CD4-positive, alpha-beta T cell (primary cell): ENCODE measurements at regions of chr9 and their contacts with region 1.

Region 1: GRCh38 chr9:136267261-136268111 is 21.9 kb upstream of the QSOX2 start:
- DNase-seq: peak; percentile 78 to 94 (median 84)
- ATAC-seq: peak; percentile 98
- H3K4me3 ChIP-seq: peak overlapping the region; percentile 76
- H3K4me3 Mint-ChIP-seq: peak overlapping the region; percentile 79
- H3K27ac ChIP-seq: peak overlapping the region in 1 of 2 donors; percentile 55
- H3K27ac Mint-ChIP-seq: peak overlapping the region; percentile 75
- H3K4me1 ChIP-seq: peaks cover 15% of the 10 kb centered on the region
- H3K4me1 Mint-ChIP-seq: peaks cover 4% of the 10 kb centered on the region
- H3K27me3 ChIP-seq: no peaks in the 10 kb centered on the region
- H3K27me3 Mint-ChIP-seq: no peaks in the 10 kb centered on the region
- CTCF ChIP-seq: peak; percentile 28

Region 2: GRCh38 chr9:135060461-135061116 is 1206.9 kb before region 1 on chr9:
- CTCF ChIA-PET with region 1: no interaction called
- POLR2A ChIA-PET with region 1: no interaction called
- intact Hi-C with region 1: no loop called
- DNase-seq: peak in 1 of 14 experiments; percentile 28
- ATAC-seq: no peak
- H3K4me3 ChIP-seq: no peak overlapping the region
- H3K4me3 Mint-ChIP-seq: no peak overlapping the region
- H3K27ac ChIP-seq: no peak overlapping the region
- H3K27ac Mint-ChIP-seq: no peak overlapping the region
- H3K4me1 ChIP-seq: no peaks in the 10 kb centered on the region
- H3K4me1 Mint-ChIP-seq: no peaks in the 10 kb centered on the region
- H3K27me3 ChIP-seq: peaks cover 0 to 4% of the 10 kb centered on the region in 2 experiments
- H3K27me3 Mint-ChIP-seq: peaks cover 4% of the 10 kb centered on the region
- CTCF ChIP-seq: no peak

Region 3: DNA sequence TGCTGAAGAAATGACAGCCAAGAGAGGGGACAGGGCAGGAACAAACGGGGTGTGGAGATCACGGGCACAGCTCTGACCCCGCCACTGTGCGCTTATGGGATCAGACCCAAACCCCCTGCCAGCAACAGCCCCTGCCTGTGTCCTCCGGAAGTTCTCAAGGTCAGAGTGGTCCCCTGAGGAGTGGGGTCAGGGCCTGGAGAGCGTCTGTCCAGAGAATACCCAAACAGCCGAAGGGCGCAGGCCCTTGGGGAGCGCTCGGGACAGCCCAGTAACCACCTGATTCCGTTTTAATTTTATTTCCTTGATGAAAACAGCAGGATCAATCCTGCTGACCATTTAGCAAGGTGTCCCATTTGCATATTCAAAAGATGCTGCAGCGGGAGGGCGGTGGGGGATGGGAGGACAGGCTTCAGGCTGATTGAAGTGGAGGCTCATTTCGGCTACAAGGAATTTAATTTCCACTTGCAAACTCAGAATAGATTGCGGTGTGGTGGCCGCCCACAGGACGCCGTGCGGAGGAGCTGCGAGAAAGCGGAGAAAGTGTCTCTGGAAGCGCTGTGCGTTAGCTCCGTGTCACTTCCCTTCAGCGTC is 116.2 kb before region 1 on chr9:
- CTCF ChIA-PET with region 1: no interaction called
- POLR2A ChIA-PET with region 1: no interaction called
- intact Hi-C with region 1: no loop called
- DNase-seq: no peak
- ATAC-seq: no peak
- H3K4me3 ChIP-seq: no peak overlapping the region
- H3K4me3 Mint-ChIP-seq: no peak overlapping the region
- H3K27ac ChIP-seq: no peak overlapping the region
- H3K27ac Mint-ChIP-seq: no peak overlapping the region
- H3K4me1 ChIP-seq: no peaks in the 10 kb centered on the region
- H3K4me1 Mint-ChIP-seq: no peaks in the 10 kb centered on the region
- H3K27me3 ChIP-seq: peaks cover 0 to 14% of the 10 kb centered on the region in 2 experiments
- H3K27me3 Mint-ChIP-seq: peaks cover 2% of the 10 kb centered on the region
- CTCF ChIP-seq: no peak

Region 4: DNA sequence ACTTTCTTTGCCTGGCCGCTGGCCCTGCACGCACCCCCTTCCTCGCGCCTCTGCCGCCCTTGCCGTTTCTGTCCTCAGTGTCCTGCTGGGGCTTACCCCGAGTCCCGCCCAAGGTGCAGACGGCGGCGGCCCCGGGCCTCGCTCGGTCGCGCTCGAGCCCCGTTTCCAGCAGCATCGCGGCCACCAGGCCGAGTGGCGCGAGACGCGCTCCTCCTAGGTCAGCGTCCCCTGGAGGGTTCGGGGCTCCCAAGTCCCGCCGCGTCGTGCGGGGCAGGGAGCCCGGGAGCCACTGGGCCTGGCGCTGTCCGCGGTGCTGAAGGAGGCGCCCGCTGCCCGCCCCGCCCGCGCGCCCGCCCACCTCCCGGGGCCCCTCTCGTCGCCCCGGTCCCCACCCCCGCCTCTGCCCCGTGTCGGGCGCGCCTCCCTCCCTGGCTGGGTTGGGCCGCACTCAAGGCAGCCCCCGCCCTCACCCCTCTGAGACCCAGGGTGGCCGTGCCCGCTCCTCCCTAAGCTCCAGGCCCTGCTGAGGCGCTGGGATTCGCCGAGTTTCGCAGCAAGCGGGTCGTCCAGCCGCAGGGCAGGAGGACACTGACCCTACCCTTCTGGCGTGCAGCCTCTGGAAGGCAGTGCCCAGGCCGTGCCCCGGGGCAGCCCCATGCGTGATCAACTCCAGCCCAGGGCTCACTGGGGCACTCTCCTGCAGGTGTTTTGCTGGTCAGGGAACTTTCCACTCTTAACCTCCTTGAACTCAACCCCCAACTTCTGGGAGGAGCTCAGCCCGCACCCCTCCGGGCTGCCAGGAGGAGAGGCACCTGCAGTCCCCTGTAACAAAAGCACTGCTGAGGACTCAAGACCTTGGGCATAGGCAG is 62.4 kb before region 1 on chr9 and contains the start of gene LHX3:
- CTCF ChIA-PET with region 1: no interaction called
- POLR2A ChIA-PET with region 1: no interaction called
- intact Hi-C with region 1: no loop called
- DNase-seq: peak in 7 of 14 experiments; percentile 6 to 59 (median 13)
- ATAC-seq: peak; percentile 51
- H3K4me3 ChIP-seq: no peak within 1 kb of the TSS
- H3K4me3 Mint-ChIP-seq: no peak within 1 kb of the TSS
- H3K27ac ChIP-seq: no peak within 1 kb of the TSS
- H3K27ac Mint-ChIP-seq: no peak within 1 kb of the TSS
- H3K4me1 ChIP-seq: no peaks in the 10 kb centered on the region
- H3K4me1 Mint-ChIP-seq: no peaks in the 10 kb centered on the region
- H3K27me3 ChIP-seq: peaks cover 33 to 38% of the 10 kb centered on the region in 2 experiments
- H3K27me3 Mint-ChIP-seq: peaks cover 27% of the 10 kb centered on the region
- CTCF ChIP-seq: no peak
- total RNA-seq, gene LHX3: 0.11 to 0.16 TPM

Region 5: DNA sequence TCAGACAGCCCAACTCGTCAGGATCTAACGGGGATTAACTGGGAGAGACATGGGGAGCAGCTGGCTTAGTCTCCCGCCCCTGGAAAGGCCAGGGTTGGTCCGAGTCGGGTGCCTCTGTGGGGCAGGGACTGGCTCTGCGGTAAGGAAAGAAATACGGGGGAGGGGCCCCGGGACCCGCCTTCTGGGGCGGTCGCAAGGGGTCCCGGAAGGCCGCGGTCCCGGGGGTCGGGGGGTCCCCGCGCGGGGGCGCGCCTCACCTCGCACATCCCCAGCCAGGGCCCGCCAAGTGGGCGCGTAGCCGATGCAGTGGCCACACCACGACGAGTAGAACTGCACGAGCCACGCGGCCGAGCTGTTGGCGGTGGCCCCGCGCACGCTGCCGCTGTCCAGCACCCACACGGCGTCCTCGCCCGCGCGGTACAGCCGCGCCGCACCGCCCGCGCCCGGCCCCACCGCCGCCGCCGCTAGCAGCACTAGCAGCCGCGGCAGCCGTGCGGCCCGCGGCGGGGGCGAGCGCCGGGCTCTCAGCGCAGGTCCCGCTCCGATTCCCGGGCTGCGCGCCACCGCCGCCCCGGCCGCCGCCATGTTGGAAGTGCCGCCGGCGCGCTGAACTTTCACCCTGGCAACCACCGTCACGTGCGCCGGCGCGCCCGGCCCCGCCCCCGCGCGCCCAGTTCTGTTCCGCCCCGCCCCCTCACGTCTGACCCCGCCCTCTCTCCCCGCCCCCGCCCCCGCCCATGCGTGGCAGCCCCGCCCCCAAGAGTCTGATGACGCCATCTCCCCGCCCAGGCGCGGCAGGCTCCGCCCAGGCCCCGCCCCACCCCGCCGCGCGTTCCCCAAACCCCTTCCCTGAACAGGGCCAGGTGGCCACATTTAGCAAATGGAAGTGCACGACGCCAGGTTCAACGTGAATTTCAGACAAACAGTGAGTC is 22.0 kb before region 1 on chr9 and contains the start of gene QSOX2:
- CTCF ChIA-PET with region 1: interaction called, 4 read pairs
- POLR2A ChIA-PET with region 1: interaction called, 12 read pairs
- intact Hi-C with region 1: loop called in 1 of 2 experiments (anchors 1 kb)
- DNase-seq: peak; percentile 73 to 94 (median 84)
- ATAC-seq: peak; percentile 81
- H3K4me3 ChIP-seq: peak within 1 kb of the TSS; percentile 63
- H3K4me3 Mint-ChIP-seq: peak within 1 kb of the TSS; percentile 94
- H3K27ac ChIP-seq: peak within 1 kb of the TSS; percentile 15 to 20
- H3K27ac Mint-ChIP-seq: peak within 1 kb of the TSS; percentile 76
- H3K4me1 ChIP-seq: peaks cover 39% of the 10 kb centered on the region
- H3K4me1 Mint-ChIP-seq: peaks cover 41% of the 10 kb centered on the region
- H3K27me3 ChIP-seq: no peaks in the 10 kb centered on the region
- H3K27me3 Mint-ChIP-seq: no peaks in the 10 kb centered on the region
- CTCF ChIP-seq: no peak
- total RNA-seq, gene QSOX2: 14.4 TPM